Kidney (tissue), 22 donors: ENCODE measurements at regions of chr19 and their contacts with region 1.

Region 1: GRCh38 chr19:15555759-15556633 is 47.7 kb downstream of the CYP4F22 start:
- DNase-seq: peak; percentile 92 to 95 (median 93)
- H3K4me3 ChIP-seq: peak overlapping the region; percentile 13 to 34 (median 27)
- H3K27ac ChIP-seq: no peak overlapping the region
- H3K4me1 ChIP-seq: peaks cover 0 to 11% (median 0%) of the 10 kb centered on the region in 3 donors
- H3K27me3 ChIP-seq: peaks cover 2% of the 10 kb centered on the region
- CTCF ChIP-seq: peak; percentile 91

Region 2: DNA sequence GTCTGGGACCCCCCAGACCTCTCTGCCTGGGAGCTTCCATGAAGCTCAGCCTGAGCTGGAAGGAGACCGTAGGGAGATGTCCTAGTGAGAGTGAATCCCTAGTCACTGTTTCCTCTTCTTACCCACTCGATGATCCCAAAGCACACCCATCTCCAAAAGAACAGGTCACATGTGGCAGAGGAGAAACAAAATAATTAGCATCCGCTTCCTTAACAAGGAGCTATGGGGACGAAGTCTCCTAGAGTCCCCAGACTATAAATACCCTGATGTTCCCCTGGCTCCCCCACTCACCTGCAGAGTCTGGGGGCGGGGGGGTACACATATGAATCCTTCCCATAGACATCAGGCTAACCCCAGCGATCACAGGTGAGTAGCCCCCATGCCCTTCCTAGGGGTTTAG is 474.1 kb before region 1 on chr19 and contains the start of gene OR1I1:
- intact Hi-C with region 1: loop called (anchors 10 kb)
- DNase-seq: no peak
- H3K4me3 ChIP-seq: no peak within 1 kb of the TSS
- H3K27ac ChIP-seq: no peak within 1 kb of the TSS
- H3K4me1 ChIP-seq: no peaks in the 10 kb centered on the region
- H3K27me3 ChIP-seq: no peaks in the 10 kb centered on the region
- CTCF ChIP-seq: no peak
- total RNA-seq, gene OR1I1: not detected

Region 3: DNA sequence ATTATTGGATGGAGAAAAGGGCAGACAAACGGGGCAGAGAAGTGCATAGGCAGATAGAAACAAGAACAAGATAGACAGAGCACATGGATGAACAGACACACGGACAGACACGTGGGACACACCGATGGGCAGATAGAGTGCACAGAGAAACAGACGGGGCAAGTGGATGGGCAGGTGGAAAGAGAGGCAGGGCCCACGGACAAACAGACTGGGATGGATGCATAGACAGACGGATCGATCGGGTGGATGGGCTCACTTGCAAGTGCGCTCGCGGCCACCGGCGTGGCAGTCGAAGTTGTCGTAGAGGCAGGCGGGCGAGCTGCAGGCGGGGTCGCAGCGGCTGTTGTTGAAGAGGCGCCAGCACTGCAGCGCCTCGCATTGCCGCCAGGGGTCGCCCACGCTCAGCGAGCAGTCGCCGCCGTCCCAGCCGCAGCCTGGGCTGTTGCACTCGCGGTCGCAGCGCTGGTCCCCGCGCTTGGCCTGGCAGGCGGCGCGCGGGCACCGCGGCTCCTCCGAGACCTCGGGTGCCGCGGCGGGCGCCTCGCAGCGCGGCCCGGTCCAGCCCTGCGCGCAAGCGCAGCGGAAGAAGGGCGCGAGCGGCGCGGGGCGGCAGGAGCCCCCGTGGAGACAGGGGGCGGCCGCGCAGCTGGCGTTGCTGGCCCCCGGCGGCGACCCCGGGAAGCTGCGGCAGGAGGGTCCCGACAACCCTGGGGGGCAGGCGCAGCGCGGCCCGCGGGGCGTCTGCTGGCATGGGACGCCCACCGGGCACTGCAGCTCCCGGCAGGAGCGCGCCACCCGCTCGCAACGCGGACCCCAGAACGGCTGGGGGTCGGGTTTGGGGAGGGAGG is 378.5 kb before region 1 on chr19:
- intact Hi-C with region 1: loop called (anchors 10 kb)
- DNase-seq: peak; percentile 90 to 92 (median 92)
- H3K4me3 ChIP-seq: peak overlapping the region in 1 of 3 donors; percentile 11
- H3K27ac ChIP-seq: no peak overlapping the region
- H3K4me1 ChIP-seq: peaks cover 0 to 2% (median 0%) of the 10 kb centered on the region in 3 donors
- H3K27me3 ChIP-seq: no peaks in the 10 kb centered on the region
- CTCF ChIP-seq: peak; percentile 98